ENCODE measurements at regions of chr18 and their contacts with region 1.

Region 1: GRCh38 chr18:26548429-26549262 is at the start of gene KCTD1:
- DNase-seq: peak; percentile 75
- ATAC-seq: peak; percentile 70
- H3K4me3 ChIP-seq: peak within 1 kb of the TSS; percentile 73 to 78 (median 73)
- H3K27ac ChIP-seq: no peak within 1 kb of the TSS
- H3K4me1 ChIP-seq: peaks cover 40% of the 10 kb centered on the region
- H3K27me3 ChIP-seq: peaks cover 3 to 31% of the 10 kb centered on the region in 2 experiments; a peak in 4 of 5 replicates
- CTCF ChIP-seq: no peak
- EP300 ChIP-seq: no peak
- POLR2A ChIP-seq: peak in 1 of 2 experiments; percentile 46; a peak in 1 of 4 replicates
- RAD21 ChIP-seq: no peak
- total RNA-seq, gene KCTD1: 4.5 and 6.8 TPM in 2 replicates

Region 2: DNA sequence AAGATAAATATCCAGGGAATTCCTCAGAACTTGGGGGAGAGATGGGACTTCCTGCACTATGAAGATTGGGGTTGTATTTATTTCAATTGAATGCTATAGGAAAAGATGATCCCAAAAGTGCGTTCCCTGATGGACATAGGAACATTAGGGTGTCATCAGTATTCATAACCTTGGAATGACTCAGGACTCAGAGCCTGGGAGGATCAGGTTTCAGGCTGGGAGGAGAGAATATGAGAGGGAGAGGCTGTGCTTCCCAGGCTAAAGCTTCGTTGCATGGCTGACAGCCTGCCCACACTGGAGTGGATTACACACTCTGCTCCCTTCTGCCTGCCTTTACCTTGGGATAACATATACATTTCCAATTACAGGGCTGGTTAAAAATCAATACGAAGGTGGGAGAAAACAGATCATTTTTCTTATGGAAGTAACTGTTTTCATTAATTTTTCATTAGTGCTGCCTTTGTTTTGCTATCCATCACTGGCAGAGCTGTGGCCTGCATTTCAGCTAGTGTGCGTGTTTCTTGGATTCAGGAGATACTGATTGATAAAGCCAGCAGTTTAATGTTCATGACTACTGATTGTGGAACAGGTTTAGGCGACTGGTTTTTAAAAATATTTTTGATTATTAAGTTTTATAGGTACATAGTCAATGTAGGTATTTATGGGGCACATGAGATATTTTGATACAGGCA is 119.0 kb before region 1 on chr18:
- CTCF ChIA-PET with region 1: no interaction called
- POLR2A ChIA-PET with region 1: no interaction called
- in situ Hi-C with region 1: loop called (anchors 25 kb)
- intact Hi-C with region 1: no loop called
- DNase-seq: peak; percentile 4
- ATAC-seq: peak; percentile 67; the same call in 2 of the 3 replicates
- H3K4me3 ChIP-seq: no peak overlapping the region
- H3K27ac ChIP-seq: no peak overlapping the region
- H3K4me1 ChIP-seq: no peaks in the 10 kb centered on the region
- H3K27me3 ChIP-seq: peaks cover 0 to 6% of the 10 kb centered on the region in 2 experiments; a peak in 1 of 5 replicates
- CTCF ChIP-seq: no peak
- EP300 ChIP-seq: no peak
- POLR2A ChIP-seq: no peak
- RAD21 ChIP-seq: no peak

Region 3: GRCh38 chr18:26487437-26487836 is 61.2 kb before region 1 on chr18:
- CTCF ChIA-PET with region 1: no interaction called
- POLR2A ChIA-PET with region 1: interaction called, 4 read pairs
- in situ Hi-C with region 1: no loop called
- intact Hi-C with region 1: loop called (anchors 5 kb)
- DNase-seq: peak; percentile 63
- ATAC-seq: peak; percentile 14; the same call in 1 of the 3 replicates
- H3K4me3 ChIP-seq: no peak overlapping the region
- H3K27ac ChIP-seq: no peak overlapping the region
- H3K4me1 ChIP-seq: peaks cover 56% of the 10 kb centered on the region
- H3K27me3 ChIP-seq: no peaks in the 10 kb centered on the region
- CTCF ChIP-seq: no peak
- EP300 ChIP-seq: peak in 1 of 2 experiments; percentile 19; a peak in 1 of 4 replicates
- POLR2A ChIP-seq: no peak
- RAD21 ChIP-seq: no peak

Measured in HepG2 (cell line).